ENCODE measurements at regions of chr1 and their contacts with region 1.

Region 1: DNA sequence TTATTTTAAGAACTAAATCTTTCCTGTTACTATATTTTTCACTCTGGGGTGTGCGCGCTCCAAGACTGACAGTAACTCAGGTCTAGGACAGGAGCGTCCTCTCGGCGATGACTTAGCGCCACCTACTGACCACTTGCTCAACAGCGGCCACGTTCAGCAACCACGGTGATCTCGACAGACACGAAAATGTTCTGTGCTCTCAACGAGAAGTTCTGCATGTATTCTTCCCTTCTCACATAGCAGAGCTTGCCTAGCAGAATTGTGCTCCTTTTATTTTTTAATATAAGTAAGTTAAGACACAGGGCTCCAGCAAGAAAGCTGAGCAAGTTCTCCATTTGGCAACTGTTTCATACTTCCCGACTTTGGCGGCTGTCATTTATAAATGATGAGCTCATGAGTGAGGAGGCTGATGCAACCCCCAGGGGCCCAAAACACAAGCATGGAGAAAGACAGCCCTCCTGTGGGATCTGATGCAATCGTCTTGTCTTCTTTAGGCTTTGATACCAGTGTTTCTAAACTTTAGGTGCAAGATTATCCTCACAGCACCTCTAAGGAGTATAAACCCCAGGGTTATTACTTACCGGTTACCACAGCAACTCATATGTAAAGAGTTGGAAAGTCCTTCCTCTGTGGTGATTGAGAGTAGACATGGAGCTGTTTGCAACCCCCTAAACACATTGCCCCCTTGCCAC is 92.6 kb downstream of the HHIPL2 start:
- DNase-seq: peak; percentile 81
- H3K4me3 ChIP-seq: peak overlapping the region; percentile 2 to 14 (median 10)
- H3K27ac ChIP-seq: peak overlapping the region; percentile 72
- H3K4me1 ChIP-seq: peaks cover 14% of the 10 kb centered on the region
- H3K27me3 ChIP-seq: no peaks in the 10 kb centered on the region
- CTCF ChIP-seq: peak; percentile 97 to 99

Region 2: DNA sequence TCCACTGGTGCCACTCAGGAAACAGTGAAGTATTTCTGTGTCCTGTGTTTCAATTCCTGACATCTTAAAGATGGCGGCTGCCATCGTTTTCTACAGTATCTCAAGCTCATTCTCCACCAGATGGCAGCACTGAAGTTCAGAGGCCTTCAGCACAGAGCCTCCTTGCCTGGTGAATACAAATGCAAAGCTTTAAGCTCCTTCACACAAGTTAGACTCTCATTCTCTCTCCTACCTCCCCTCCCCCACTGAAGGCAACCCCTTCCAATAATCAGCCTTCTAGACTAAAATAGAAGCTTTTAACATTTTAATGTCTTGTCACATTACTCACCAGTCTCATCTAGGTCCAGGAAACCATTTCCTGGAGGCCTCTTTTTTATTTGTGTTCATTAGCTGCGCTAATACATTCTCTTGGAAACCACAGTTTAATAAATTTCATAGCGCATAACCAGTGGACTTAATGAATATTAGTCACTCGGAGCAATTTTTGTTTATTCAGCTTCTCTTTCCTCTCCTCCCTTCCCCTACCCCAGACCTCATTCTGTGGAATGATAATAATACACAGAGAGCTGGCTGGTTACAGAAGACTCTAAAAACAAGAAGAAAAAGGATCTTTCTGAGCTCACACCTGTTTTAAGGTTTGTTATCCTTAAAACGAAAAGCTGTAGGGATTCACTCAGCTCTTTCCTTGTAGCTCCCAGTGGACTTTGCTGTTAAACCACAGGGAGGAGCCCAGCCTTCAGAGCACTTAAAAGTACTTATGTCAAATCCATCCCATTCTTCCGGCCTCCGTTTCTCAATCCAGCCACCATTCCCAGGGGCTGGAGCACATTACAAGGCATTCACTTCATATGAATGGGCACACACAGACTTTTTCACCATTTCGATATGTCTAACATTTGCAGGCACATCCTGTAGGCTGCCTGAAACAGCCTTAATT is 1191.2 kb before region 1 on chr1:
- CTCF ChIA-PET with region 1: interaction called, 10 read pairs
- dilution Hi-C with region 1: no loop called
- in situ Hi-C with region 1: no loop called
- intact Hi-C with region 1: loop called (anchors 5 kb)
- DNase-seq: peak; percentile 61
- H3K4me3 ChIP-seq: no peak overlapping the region
- H3K27ac ChIP-seq: no peak overlapping the region
- H3K4me1 ChIP-seq: no peaks in the 10 kb centered on the region
- H3K27me3 ChIP-seq: peaks cover 2% of the 10 kb centered on the region
- CTCF ChIP-seq: peak; percentile 66 to 75

Region 3: DNA sequence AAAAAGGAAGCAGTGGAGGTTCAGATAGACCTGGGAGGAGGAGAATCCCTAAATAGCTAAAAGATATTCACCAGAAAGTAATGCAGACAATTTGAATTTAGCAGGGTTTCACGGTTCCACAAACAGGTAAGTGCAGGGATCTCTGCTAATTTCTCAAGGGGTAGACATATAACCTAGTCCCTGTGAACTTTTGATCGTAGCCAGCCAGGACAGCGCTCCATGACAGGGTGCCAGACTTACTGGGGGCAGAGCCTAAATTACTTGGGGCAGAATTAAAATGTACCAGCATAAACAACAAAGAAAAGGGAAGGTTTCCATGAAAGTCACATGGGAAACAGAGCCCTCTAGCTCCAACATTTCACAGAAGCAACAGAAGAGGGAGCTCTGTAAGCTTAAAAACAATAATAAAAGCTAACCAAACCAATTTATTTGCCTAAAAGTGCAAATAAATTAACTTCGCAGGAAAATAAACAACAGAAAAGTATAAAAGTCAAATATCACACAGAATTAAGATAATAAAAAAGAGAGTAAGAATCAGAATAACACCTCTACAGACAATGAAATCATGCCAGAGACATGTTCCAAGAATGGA is 911.7 kb before region 1 on chr1:
- CTCF ChIA-PET with region 1: interaction called, 3 read pairs
- dilution Hi-C with region 1: no loop called
- in situ Hi-C with region 1: no loop called
- intact Hi-C with region 1: loop called (anchors 1 kb)
- DNase-seq: peak; percentile 25
- H3K4me3 ChIP-seq: no peak overlapping the region
- H3K27ac ChIP-seq: no peak overlapping the region
- H3K4me1 ChIP-seq: peaks cover 13% of the 10 kb centered on the region
- H3K27me3 ChIP-seq: no peaks in the 10 kb centered on the region
- CTCF ChIP-seq: peak; percentile 37 to 68

Region 4: DNA sequence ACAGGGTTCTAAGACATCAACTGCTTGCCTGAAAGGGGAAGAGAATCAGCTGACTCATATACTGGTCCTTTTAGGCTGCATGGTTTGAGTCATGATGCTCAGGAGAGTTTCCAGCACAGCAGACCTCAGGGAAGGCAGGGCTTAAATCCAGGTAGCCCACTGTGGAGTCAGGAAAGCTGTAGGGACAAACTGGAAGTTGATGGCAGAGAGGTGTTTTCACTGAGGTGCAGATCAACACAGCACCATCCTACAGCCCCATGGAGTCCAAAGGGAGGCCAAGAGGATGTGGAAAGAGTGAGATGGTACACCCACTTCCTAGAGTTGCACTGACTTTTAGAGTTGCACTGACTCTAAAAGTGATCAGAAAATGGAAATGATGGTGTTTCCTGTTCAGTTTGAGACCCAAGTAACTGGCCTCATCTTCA is 461.0 kb before region 1 on chr1:
- CTCF ChIA-PET with region 1: no interaction called
- dilution Hi-C with region 1: no loop called
- in situ Hi-C with region 1: loop called in 1 of 2 experiments (anchors 10 kb)
- intact Hi-C with region 1: no loop called
- DNase-seq: peak; percentile 90
- H3K4me3 ChIP-seq: no peak overlapping the region
- H3K27ac ChIP-seq: peak overlapping the region; percentile 96
- H3K4me1 ChIP-seq: peaks cover 67% of the 10 kb centered on the region
- H3K27me3 ChIP-seq: no peaks in the 10 kb centered on the region
- CTCF ChIP-seq: no peak

Region 5: DNA sequence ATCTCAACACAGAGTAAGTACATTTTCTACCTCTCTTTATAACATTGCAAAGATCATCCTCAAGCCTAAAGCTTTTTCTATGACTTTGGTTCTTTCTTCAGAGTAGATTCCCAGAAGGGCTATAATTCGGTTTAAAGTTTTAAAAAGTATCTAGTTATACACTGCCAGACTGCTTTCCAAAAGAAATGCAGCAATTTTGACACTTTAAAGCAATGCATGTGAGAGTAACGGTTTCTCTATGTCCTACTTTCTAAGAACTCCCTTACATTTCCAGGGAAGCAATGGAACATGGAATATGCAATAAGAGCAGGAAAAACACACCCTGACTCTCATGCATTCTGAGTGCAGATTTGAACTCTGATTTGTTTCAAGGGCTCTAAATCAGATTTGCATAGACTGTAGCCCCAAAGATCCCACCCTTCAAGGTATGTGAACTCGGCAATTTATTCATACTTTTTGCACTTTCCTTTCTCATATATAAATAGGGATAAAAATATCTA is 239.0 kb before region 1 on chr1:
- CTCF ChIA-PET with region 1: no interaction called
- dilution Hi-C with region 1: no loop called
- in situ Hi-C with region 1: no loop called
- intact Hi-C with region 1: loop called (anchors 1 kb)
- DNase-seq: no peak
- H3K4me3 ChIP-seq: no peak overlapping the region
- H3K27ac ChIP-seq: no peak overlapping the region
- H3K4me1 ChIP-seq: peaks cover 4% of the 10 kb centered on the region
- H3K27me3 ChIP-seq: no peaks in the 10 kb centered on the region
- CTCF ChIP-seq: no peak

Region 6: DNA sequence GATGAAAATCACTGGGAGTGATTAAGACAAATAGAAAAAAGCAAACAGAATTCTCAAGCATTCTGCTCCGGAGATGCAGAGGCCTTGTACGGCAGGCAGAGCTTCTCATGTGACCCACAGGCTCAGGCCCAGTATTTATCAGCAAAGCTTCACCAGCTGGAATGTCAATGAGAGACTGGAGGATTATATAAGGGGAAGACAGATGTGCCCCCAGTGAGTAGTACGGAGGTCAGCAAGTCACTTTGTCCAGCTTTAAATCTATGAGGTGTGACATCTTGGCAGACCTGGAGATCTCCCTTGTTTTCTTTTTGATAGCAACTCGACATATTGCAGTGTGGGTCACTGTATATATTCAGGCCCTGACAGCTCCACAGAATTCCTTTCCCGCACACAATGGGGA is 14.3 kb before region 1 on chr1:
- CTCF ChIA-PET with region 1: no interaction called
- dilution Hi-C with region 1: no loop called
- in situ Hi-C with region 1: no loop called
- intact Hi-C with region 1: no loop called
- DNase-seq: no peak
- H3K4me3 ChIP-seq: no peak overlapping the region
- H3K27ac ChIP-seq: no peak overlapping the region
- H3K4me1 ChIP-seq: no peaks in the 10 kb centered on the region
- H3K27me3 ChIP-seq: no peaks in the 10 kb centered on the region
- CTCF ChIP-seq: no peak

Region 7: GRCh38 chr1:222521299-222522104 is 66.2 kb after region 1 on chr1:
- CTCF ChIA-PET with region 1: no interaction called
- dilution Hi-C with region 1: no loop called
- in situ Hi-C with region 1: no loop called
- intact Hi-C with region 1: no loop called
- DNase-seq: peak; percentile 80
- H3K4me3 ChIP-seq: no peak overlapping the region
- H3K27ac ChIP-seq: no peak overlapping the region
- H3K4me1 ChIP-seq: no peaks in the 10 kb centered on the region
- H3K27me3 ChIP-seq: no peaks in the 10 kb centered on the region
- CTCF ChIP-seq: no peak

Measured in mammary epithelial cell (primary cell).